Calu3 (cell line): ENCODE measurements at regions of chr4 and their contacts with region 1.

Region 1: DNA sequence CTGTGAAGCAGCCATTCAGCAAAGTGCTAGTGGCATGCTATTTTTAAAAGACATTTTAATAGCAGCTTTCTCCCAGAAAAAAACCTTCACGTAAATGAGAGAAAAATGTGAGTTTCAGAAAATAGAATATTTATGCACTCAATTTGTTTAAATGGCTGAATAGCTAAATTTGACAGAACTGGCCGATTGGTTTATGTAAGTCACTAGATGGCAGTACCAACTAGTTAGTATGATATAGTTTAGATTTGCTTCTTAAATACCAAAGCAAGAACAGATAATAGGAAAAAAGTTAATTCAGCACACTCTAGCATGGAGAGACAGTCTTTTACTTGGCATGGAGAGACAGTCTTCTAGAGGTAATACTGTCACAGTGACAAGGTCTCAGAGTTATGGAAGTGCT is 250.1 kb downstream of the SNCA start:
- DNase-seq: no peak
- H3K4me3 Mint-ChIP-seq: no peak overlapping the region
- H3K27ac Mint-ChIP-seq: no peak overlapping the region
- H3K4me1 Mint-ChIP-seq: no peaks in the 10 kb centered on the region
- H3K27me3 Mint-ChIP-seq: no peaks in the 10 kb centered on the region
- CTCF ChIP-seq: no peak

Region 2: GRCh38 chr4:89904524-89904923 is 317.7 kb after region 1 on chr4:
- CTCF ChIA-PET with region 1: no interaction called
- intact Hi-C with region 1: loop called (anchors 5 kb)
- DNase-seq: no peak
- H3K4me3 Mint-ChIP-seq: no peak overlapping the region
- H3K27ac Mint-ChIP-seq: no peak overlapping the region
- H3K4me1 Mint-ChIP-seq: no peaks in the 10 kb centered on the region
- H3K27me3 Mint-ChIP-seq: no peaks in the 10 kb centered on the region
- CTCF ChIP-seq: no peak